PC-9 (cell line): ENCODE measurements at regions of chr15 and their contacts with region 1.

Region 1: GRCh38 chr15:41994772-41995475 is 22.6 kb upstream of the EHD4 start:
- DNase-seq: no peak
- H3K4me3 ChIP-seq: no peak overlapping the region
- H3K27ac ChIP-seq: no peak overlapping the region
- H3K4me1 ChIP-seq: no peaks in the 10 kb centered on the region
- H3K27me3 ChIP-seq: no peaks in the 10 kb centered on the region
- CTCF ChIP-seq: no peak

Region 2: DNA sequence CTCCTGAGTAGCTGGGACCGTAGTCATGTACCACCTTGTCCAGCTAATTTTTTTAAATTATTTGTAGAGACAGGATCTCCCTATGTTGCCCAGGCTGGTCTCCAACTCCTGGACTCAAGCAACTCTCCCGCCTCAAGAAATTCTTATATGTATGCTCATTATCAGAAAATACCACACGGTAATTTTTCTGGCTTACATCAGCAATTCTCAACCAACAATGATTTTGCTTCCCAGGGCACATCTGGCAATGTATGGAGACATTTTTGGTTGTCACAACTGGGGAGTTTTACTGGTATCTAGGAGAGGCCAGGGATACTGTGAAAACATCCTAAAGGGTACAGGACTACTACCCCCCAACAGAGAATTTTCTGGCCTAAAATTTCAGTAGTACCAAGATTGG is 1966.7 kb before region 1 on chr15:
- CTCF ChIA-PET with region 1: no interaction called
- POLR2A ChIA-PET with region 1: interaction called, 11 read pairs
- intact Hi-C with region 1: no loop called
- DNase-seq: no peak
- H3K4me3 ChIP-seq: no peak overlapping the region
- H3K27ac ChIP-seq: no peak overlapping the region
- H3K4me1 ChIP-seq: no peaks in the 10 kb centered on the region
- H3K27me3 ChIP-seq: no peaks in the 10 kb centered on the region
- CTCF ChIP-seq: no peak

Region 3: DNA sequence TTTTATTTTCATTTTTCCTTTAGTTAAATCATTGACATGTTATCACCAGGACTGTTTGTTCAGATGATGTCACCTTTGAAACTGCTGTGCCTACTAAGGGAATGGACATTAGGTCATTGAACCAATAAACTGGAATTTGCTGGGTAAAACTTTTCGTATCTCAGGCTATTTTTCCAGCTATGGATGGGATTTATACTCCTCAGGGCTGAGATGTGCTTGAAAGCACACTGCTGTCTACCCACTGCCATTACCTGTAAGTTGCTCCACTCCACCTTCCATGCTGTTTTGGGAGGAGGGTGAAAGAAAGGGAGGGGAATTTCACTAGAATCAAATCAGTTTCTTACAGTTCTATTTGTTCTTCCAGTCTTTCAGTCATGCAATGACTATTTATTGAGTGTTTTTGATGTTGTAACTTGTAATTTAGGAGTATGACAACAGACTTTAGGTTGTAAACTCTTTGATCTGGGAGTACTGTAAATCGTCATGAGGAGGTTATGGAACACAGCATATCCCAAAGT is 33.9 kb before region 1 on chr15:
- CTCF ChIA-PET with region 1: no interaction called
- POLR2A ChIA-PET with region 1: no interaction called
- intact Hi-C with region 1: no loop called
- DNase-seq: no peak
- H3K4me3 ChIP-seq: no peak overlapping the region
- H3K27ac ChIP-seq: 0 out of 2 replicates have a peak overlapping the region, but pooled peaks have one; percentile 3
- H3K4me1 ChIP-seq: peaks cover 9% of the 10 kb centered on the region
- H3K27me3 ChIP-seq: no peaks in the 10 kb centered on the region
- CTCF ChIP-seq: no peak

Region 4: GRCh38 chr15:42118650-42119445 is 123.9 kb after region 1 on chr15:
- CTCF ChIA-PET with region 1: no interaction called
- POLR2A ChIA-PET with region 1: interaction called, 12 read pairs
- intact Hi-C with region 1: no loop called
- DNase-seq: no peak
- H3K4me3 ChIP-seq: no peak overlapping the region
- H3K27ac ChIP-seq: no peak overlapping the region
- H3K4me1 ChIP-seq: no peaks in the 10 kb centered on the region
- H3K27me3 ChIP-seq: no peaks in the 10 kb centered on the region
- CTCF ChIP-seq: no peak

Region 5: GRCh38 chr15:42444415-42445063 is 449.6 kb after region 1 on chr15:
- CTCF ChIA-PET with region 1: no interaction called
- POLR2A ChIA-PET with region 1: no interaction called
- intact Hi-C with region 1: no loop called
- DNase-seq: no peak
- H3K4me3 ChIP-seq: no peak overlapping the region
- H3K27ac ChIP-seq: no peak overlapping the region
- H3K4me1 ChIP-seq: no peaks in the 10 kb centered on the region
- H3K27me3 ChIP-seq: no peaks in the 10 kb centered on the region
- CTCF ChIP-seq: no peak